WTC11 (cell line): ENCODE measurements at regions of chr3 and their contacts with region 1.

Region 1: DNA sequence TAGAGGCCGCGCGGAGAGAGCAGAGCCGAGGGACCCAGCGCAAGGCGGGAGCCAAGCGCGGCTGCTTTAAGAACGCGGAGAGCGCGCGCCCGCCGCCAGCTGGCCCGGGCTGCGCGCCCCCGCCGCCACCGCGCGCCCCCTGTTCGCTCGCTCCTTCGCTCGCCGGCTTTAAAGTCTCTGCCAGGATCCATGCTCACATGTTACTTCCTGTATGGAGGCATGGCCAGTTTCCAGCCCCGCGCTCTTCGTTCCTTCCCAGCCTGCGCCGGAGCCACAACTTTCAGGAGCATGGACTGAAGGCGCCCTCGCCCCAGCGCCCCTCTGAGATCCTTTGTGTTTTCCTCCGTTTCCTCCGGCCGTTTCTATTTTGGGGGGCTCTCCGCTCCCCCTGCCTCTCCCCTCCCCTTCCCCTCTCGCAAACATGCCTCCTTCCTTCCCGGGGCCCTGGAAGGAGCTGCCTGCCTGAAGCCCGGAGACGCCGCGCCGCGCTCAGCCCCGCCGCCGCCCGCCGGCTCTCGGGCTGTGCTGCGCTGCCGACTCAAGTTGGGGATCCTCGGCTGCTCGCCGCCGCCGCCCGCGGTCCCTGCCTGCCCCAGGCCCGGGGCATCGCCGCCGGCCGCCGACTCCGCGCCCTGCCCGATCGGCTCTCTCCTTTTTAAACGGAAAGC is at the start of gene PTPRG:
- DNase-seq: peak; percentile 78
- ATAC-seq: peak; percentile 46
- H3K4me3 Mint-ChIP-seq: peak within 1 kb of the TSS; percentile 95
- H3K27ac Mint-ChIP-seq: peak within 1 kb of the TSS; percentile 97
- H3K4me1 Mint-ChIP-seq: peaks cover 34% of the 10 kb centered on the region
- H3K27me3 Mint-ChIP-seq: peaks cover 11% of the 10 kb centered on the region
- CTCF ChIP-seq: no peak
- total RNA-seq, gene PTPRG: 106 to 121 TPM (median 119 TPM) in 3 replicates

Region 2: DNA sequence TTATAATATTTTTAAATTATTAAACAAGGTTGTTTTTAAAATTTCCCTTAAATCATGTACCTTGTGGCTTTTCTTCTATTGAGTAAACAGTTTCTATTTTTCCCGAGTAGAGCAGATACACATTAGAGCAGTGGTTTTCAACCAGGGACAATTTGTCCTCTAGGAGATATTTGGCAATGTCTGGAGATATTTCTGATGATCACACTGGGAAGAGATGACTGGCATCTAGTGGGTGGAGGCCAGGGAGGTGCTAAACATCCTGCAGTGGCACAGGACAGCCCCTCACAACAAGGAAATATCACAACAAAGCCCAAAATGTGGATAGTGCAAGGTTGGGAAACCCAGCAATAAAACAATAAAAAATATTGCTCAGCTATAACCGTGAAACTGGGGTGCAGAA is 113.1 kb before region 1 on chr3:
- CTCF ChIA-PET with region 1: no interaction called
- POLR2A ChIA-PET with region 1: no interaction called
- DNase-seq: no peak
- ATAC-seq: no peak
- H3K4me3 Mint-ChIP-seq: no peak overlapping the region
- H3K27ac Mint-ChIP-seq: no peak overlapping the region
- H3K4me1 Mint-ChIP-seq: no peaks in the 10 kb centered on the region
- H3K27me3 Mint-ChIP-seq: no peaks in the 10 kb centered on the region
- CTCF ChIP-seq: no peak

Region 3: GRCh38 chr3:61530355-61530754 is 31.2 kb before region 1 on chr3:
- CTCF ChIA-PET with region 1: interaction called, 16 read pairs
- POLR2A ChIA-PET with region 1: interaction called, 4 read pairs
- DNase-seq: no peak
- ATAC-seq: peak; percentile 74
- H3K4me3 Mint-ChIP-seq: no peak overlapping the region
- H3K27ac Mint-ChIP-seq: no peak overlapping the region
- H3K4me1 Mint-ChIP-seq: peaks cover 52% of the 10 kb centered on the region
- H3K27me3 Mint-ChIP-seq: peaks cover 17% of the 10 kb centered on the region; the same call in 1 of the 2 replicates
- CTCF ChIP-seq: no peak

Region 4: GRCh38 chr3:61574854-61575253 is 13.3 kb after region 1 on chr3:
- CTCF ChIA-PET with region 1: interaction called, 12 read pairs
- POLR2A ChIA-PET with region 1: interaction called, 7 read pairs
- DNase-seq: no peak
- ATAC-seq: peak; percentile 25; the same call in 1 of the 2 replicates
- H3K4me3 Mint-ChIP-seq: no peak overlapping the region
- H3K27ac Mint-ChIP-seq: peak overlapping the region; percentile 6; the same call in 1 of the 2 replicates
- H3K4me1 Mint-ChIP-seq: peaks cover 90% of the 10 kb centered on the region
- H3K27me3 Mint-ChIP-seq: no peaks in the 10 kb centered on the region
- CTCF ChIP-seq: no peak

Region 5: DNA sequence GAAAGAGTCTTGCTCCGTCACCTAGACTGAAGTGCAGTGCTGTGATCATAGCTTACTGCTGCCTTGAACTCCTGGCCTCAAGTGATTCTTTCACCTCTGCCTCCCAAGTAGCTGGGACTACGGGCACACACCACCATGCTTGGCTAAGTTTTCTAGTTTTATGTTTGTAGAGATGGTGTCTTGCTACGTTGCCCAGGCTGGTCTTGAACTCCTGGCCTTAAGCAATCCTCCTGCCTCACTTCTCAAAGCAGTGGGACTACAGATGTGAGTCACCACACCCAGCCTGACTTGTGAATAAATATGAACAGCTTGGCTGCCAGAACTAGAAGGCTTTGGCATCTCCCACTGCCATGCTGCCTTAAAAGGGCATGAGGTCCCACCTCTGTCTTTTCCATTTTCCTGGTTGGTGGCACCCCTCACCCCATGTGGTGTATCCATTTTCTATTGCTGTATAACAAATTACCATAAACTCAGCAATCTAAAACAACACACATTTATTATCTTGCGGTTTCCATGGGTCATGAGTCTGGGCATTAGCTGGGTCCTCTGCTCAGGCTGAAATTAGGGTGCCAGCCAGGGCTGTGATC is 44.2 kb after region 1 on chr3:
- CTCF ChIA-PET with region 1: interaction called, 10 read pairs
- POLR2A ChIA-PET with region 1: no interaction called
- DNase-seq: no peak
- ATAC-seq: no peak
- H3K4me3 Mint-ChIP-seq: no peak overlapping the region
- H3K27ac Mint-ChIP-seq: no peak overlapping the region
- H3K4me1 Mint-ChIP-seq: peaks cover 33% of the 10 kb centered on the region
- H3K27me3 Mint-ChIP-seq: no peaks in the 10 kb centered on the region
- CTCF ChIP-seq: no peak

Region 6: GRCh38 chr3:61688307-61688984 is 126.9 kb after region 1 on chr3:
- CTCF ChIA-PET with region 1: interaction called, 15 read pairs
- POLR2A ChIA-PET with region 1: interaction called, 7 read pairs
- DNase-seq: peak; percentile 84
- ATAC-seq: peak; percentile 92
- H3K4me3 Mint-ChIP-seq: peak overlapping the region; percentile 48
- H3K27ac Mint-ChIP-seq: peak overlapping the region; percentile 94
- H3K4me1 Mint-ChIP-seq: peaks cover 97% of the 10 kb centered on the region
- H3K27me3 Mint-ChIP-seq: no peaks in the 10 kb centered on the region
- CTCF ChIP-seq: no peak

Region 7: DNA sequence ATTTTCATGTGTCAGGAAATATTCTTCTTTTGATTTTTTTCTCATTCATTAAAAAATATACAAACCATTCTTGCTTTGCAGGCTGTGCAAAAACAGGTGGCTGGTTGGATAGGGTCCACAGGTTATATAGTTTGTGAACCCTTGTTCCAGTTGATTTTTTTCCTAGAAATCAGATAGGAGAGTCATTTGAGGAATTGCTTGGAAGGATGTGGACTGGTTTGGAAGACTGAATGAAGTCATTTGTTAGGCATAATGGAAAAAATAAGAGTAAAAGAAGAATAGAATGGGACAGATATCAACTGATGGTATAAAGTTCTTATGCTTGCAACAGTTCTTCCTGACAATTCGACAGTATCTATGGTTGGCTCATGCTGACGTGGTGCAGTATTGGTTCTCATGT is 189.3 kb after region 1 on chr3:
- CTCF ChIA-PET with region 1: no interaction called
- POLR2A ChIA-PET with region 1: interaction called, 12 read pairs
- DNase-seq: no peak
- ATAC-seq: no peak
- H3K4me3 Mint-ChIP-seq: no peak overlapping the region
- H3K27ac Mint-ChIP-seq: no peak overlapping the region
- H3K4me1 Mint-ChIP-seq: peaks cover 58% of the 10 kb centered on the region
- H3K27me3 Mint-ChIP-seq: no peaks in the 10 kb centered on the region
- CTCF ChIP-seq: no peak

Region 8: GRCh38 chr3:62188681-62189383 is 627.3 kb after region 1 on chr3:
- CTCF ChIA-PET with region 1: interaction called, 24 read pairs
- POLR2A ChIA-PET with region 1: no interaction called
- DNase-seq: peak; percentile 75
- ATAC-seq: peak; percentile 58
- H3K4me3 Mint-ChIP-seq: no peak overlapping the region
- H3K27ac Mint-ChIP-seq: no peak overlapping the region
- H3K4me1 Mint-ChIP-seq: peaks cover 27% of the 10 kb centered on the region
- H3K27me3 Mint-ChIP-seq: no peaks in the 10 kb centered on the region; the same call in 1 of the 2 replicates
- CTCF ChIP-seq: peak; percentile 74